Aorta (tissue), 5 donors: ENCODE measurements at regions of chr2 and their contacts with region 1.

Region 1: DNA sequence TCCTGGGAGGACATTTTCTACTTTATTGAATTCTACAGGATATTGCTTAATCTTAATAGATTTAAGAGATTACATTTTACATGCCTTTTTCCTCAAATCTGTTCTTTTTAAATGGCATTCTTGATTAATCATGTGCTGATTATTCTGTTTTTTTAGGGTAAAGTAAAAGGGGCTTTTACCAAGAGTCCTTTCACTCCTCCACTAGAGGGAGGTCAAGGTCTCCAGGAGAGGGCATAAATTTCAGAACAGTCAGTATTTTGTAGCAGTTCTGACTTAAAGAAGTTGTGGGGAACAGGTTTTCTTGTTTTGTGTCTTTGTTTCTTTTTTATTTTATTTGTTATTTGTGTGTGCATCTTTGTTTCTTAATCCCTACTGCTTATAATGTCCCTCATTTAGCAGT is 25.4 kb downstream of the WDR75 start:
- DNase-seq: no peak
- ATAC-seq: no peak
- H3K4me3 ChIP-seq: no peak overlapping the region
- H3K27ac ChIP-seq: no peak overlapping the region
- H3K4me1 ChIP-seq: peaks cover 3 to 5% of the 10 kb centered on the region in 2 donors
- H3K27me3 ChIP-seq: no peaks in the 10 kb centered on the region

Region 2: DNA sequence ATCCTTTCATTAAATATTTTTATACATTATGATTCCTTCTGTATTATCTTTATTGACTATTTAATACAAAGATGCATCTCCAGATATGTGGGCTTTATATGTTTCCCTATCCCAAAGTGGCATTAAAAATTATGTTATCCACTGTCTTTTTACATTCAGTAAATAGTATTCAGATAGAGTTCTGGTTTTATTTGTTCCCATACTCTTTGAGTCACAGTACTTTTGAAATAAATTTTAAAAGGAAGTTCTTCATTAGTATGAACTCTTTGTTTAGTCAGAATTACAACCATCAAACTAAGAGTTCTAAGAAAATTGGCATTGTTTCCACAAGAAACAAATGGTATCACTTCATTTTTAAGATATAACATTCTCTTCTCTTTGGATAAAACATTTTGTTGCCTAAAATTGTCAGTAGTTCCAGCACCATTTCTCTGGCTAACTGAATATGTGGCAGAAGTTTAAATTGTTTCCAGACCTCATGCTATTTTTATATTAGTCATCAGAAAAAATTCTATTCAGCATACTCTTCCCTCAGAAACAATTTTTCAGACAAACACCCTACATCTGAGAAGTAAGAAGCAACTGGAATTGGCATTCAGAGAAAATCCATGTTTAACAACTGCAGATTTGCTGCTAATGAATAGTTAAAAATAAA is 198.6 kb before region 1 on chr2:
- intact Hi-C with region 1: no loop called
- DNase-seq: no peak
- ATAC-seq: no peak
- H3K4me3 ChIP-seq: no peak overlapping the region
- H3K27ac ChIP-seq: no peak overlapping the region
- H3K4me1 ChIP-seq: no peaks in the 10 kb centered on the region
- H3K27me3 ChIP-seq: no peaks in the 10 kb centered on the region

Region 3: DNA sequence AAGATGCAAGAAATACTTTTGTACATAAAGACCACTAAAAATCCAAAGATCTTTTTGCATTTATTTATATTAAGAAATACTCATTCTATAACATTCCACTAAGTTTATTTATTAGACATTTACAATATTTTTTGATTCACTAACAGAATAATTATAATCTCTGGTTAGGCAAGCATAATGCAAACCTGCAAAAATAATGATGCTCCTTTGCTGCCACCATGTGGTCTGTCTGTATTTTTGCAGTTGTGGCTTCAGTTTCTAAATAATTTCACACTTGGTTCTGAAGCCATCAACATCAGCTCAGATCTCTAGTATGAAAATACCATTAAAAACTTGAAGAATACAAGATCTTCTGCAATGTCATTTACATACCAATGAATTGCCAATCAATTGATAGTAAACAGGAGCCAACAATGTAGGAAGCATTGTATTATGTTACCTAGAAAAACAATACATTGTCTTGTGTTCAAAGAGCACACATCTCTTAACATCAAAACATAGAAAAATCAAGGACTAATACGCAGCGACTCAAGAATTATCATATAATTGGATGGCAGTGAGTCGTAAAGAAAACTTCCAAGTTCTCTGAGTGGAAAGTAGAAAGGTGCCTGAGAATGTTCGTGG is 54.2 kb before region 1 on chr2:
- intact Hi-C with region 1: no loop called
- DNase-seq: no peak
- ATAC-seq: peak; percentile 88
- H3K4me3 ChIP-seq: no peak overlapping the region
- H3K27ac ChIP-seq: peak overlapping the region in 1 of 2 donors; percentile 28
- H3K4me1 ChIP-seq: no peaks in the 10 kb centered on the region
- H3K27me3 ChIP-seq: no peaks in the 10 kb centered on the region

Region 4: DNA sequence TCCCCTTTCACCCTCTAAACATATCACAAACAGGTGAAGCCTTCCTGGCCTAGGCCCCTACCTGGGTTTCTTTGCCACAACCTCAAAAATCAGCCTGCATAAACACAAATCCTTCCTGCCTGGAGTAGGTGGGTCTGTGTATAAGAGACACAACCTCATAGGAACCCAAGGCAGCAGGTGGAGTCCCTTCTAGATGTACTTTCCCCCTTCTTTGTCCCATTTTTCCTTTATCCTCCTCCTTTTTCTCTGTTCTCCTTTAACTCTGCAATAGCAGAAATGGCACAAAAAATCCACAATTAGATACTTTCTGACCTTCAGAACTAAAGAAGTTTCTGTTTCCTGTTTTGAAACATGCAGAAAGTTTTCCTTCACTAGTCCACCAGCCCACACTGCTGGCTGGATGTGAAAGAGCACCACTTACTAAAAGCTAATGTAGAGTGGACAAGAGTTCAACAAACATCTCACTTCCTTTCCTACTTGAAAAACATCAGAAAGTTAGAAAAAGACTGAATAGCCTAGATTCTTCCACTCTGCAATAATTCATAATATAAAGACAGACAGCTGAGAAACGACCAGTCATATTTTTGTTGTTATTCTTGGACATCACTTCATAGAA is 102.7 kb after region 1 on chr2:
- intact Hi-C with region 1: loop called (anchors 5 kb)
- DNase-seq: peak in 1 of 2 donors; percentile 64
- ATAC-seq: peak; percentile 49
- H3K4me3 ChIP-seq: no peak overlapping the region
- H3K27ac ChIP-seq: peak overlapping the region; percentile 75 to 76
- H3K4me1 ChIP-seq: peaks cover 8 to 15% of the 10 kb centered on the region in 2 donors
- H3K27me3 ChIP-seq: no peaks in the 10 kb centered on the region

Region 5: DNA sequence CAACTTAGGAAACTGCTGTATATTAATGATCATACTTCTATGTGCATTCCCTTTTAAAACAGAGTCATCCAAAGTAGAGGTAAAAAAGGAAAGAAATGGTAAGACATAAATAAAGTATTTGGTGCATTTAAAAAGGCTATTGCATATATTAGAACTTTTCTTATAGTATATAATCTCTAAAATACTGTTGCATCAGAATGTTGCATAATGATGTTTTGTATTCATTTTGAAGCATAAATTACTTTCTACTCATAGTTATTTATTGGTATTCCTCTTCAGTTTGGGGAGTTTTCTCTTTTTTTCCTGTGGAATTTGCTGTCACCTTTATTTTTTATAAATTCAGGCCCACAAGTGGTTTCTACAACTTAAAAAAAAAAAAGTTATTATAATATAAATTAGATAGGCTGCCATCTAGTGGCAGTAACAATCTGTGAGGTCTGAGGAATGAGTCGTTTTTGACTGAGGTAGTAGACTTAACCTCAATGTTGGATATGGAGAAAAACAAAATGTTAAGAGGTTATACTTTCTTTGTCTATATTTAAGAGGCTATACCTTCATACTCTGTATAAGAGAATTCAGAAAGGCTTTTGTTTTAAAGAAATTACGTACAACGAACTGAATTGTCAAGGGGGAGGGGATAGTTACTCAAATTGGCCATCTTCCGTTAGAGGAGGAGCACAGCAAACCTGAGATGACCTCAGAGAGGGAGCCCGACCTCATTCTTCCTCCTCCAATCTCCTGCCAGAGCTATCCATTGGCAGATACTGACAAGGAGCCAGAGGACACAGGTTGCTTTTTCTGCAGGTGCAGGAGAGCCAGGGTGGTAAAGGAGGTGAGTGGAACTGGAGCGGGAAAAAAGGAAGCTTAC is 231.6 kb after region 1 on chr2:
- intact Hi-C with region 1: loop called in 1 of 2 experiments (anchors 5 kb)
- DNase-seq: no peak
- ATAC-seq: peak; percentile 68
- H3K4me3 ChIP-seq: no peak overlapping the region
- H3K27ac ChIP-seq: no peak overlapping the region
- H3K4me1 ChIP-seq: no peaks in the 10 kb centered on the region
- H3K27me3 ChIP-seq: no peaks in the 10 kb centered on the region